ENCODE measurements at regions of chr18 and their contacts with region 1.

Region 1: GRCh38 chr18:63518178-63519012 is 23.8 kb upstream of the SERPINB12 start:
- DNase-seq: peak; percentile 90
- H3K4me3 ChIP-seq: no peak overlapping the region
- H3K27ac ChIP-seq: no peak overlapping the region
- H3K4me1 ChIP-seq: no peaks in the 10 kb centered on the region
- H3K27me3 ChIP-seq: no peaks in the 10 kb centered on the region
- CTCF ChIP-seq: peak; percentile 77

Region 2: GRCh38 chr18:63578357-63578958 is 60.1 kb after region 1 on chr18:
- CTCF ChIA-PET with region 1: interaction called, 5 read pairs
- POLR2A ChIA-PET with region 1: no interaction called
- intact Hi-C with region 1: loop called (anchors 1 kb)
- DNase-seq: peak; percentile 79
- H3K4me3 ChIP-seq: no peak overlapping the region
- H3K27ac ChIP-seq: no peak overlapping the region
- H3K4me1 ChIP-seq: peaks cover 25% of the 10 kb centered on the region
- H3K27me3 ChIP-seq: no peaks in the 10 kb centered on the region
- CTCF ChIP-seq: peak; percentile 89

Region 3: GRCh38 chr18:63676526-63676925 is 158.1 kb after region 1 on chr18:
- CTCF ChIA-PET with region 1: no interaction called
- POLR2A ChIA-PET with region 1: no interaction called
- intact Hi-C with region 1: loop called (anchors 2 kb)
- DNase-seq: peak; percentile 53
- H3K4me3 ChIP-seq: no peak overlapping the region
- H3K27ac ChIP-seq: no peak overlapping the region
- H3K4me1 ChIP-seq: peaks cover 23% of the 10 kb centered on the region
- H3K27me3 ChIP-seq: no peaks in the 10 kb centered on the region
- CTCF ChIP-seq: peak; percentile 70

Region 4: DNA sequence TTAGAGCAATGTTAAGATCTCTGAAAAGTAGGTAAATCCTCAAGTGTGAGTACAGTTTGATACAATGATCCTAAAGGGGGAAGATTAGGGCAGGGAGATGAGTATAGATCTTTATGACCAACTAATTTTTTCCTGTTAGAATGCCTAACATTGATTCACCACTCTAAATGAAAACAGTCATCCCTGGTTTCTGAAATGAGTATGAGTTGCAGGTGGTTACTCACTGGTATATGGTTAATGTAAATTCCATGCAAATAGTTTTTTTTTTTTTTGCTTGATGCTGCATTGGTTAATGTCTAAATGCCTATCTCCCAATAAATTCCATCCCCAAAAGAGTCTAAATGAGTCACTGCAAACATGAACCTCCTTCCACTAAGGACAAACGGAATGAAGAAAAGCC is 314.1 kb after region 1 on chr18:
- CTCF ChIA-PET with region 1: no interaction called
- POLR2A ChIA-PET with region 1: no interaction called
- intact Hi-C with region 1: no loop called
- DNase-seq: no peak
- H3K4me3 ChIP-seq: no peak overlapping the region
- H3K27ac ChIP-seq: no peak overlapping the region
- H3K4me1 ChIP-seq: no peaks in the 10 kb centered on the region
- H3K27me3 ChIP-seq: no peaks in the 10 kb centered on the region
- CTCF ChIP-seq: no peak

Region 5: DNA sequence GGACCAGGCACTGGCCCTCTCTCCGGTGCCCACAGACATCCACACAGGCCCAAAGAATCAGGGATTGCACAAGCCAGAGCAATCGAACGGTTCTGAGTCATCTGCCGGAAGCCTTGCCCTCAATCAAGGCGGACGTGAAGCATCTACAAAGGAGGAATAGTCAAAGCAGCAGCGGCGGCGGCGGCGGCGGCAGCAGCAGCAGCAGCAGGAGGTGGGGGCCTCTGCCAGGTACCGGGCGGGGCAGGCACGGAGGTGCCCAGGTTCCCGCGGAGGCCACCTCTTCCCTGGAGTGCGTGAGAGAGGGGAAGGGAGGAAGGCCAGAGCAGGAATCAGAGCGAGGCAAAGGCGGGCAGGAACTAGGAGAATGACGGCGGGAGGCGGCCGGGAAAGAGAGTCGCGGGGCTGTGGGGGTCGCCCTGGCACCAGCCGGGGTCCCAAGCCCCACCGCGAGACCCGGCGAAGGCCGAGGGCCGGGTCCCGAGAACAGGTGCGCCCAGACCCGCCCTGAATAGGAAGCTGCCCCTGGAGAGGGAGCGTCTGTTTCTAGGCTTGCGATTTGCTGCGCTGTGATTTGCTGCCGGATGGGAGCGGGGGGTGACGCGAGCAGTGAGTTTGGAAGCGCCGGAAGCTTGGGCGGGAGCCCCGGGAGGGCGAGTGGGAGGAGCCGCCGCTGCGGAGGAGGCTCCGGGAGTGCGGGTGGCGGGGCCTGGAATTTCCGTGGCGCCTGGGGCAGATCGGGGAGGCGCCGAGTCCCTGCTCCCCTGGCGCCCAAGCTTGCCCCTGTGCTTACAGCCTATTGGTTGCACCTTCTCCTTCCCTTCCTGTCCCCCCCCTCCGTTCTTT is 451.8 kb after region 1 on chr18 and contains the start of gene SERPINB8:
- CTCF ChIA-PET with region 1: no interaction called
- POLR2A ChIA-PET with region 1: no interaction called
- intact Hi-C with region 1: loop called (anchors 10 kb)
- DNase-seq: peak; percentile 97
- H3K4me3 ChIP-seq: peak within 1 kb of the TSS; percentile 89
- H3K27ac ChIP-seq: peak within 1 kb of the TSS; percentile 99
- H3K4me1 ChIP-seq: peaks cover 8% of the 10 kb centered on the region
- H3K27me3 ChIP-seq: no peaks in the 10 kb centered on the region
- CTCF ChIP-seq: no peak
- total RNA-seq, gene SERPINB8: 11.3 and 26.4 TPM in 2 replicates